A673 (cell line): ENCODE measurements at regions of chr12 and their contacts with region 1.

Region 1: GRCh38 chr12:122526683-122527477 is at the starts of genes KNTC1 and RSRC2:
- DNase-seq: peak; percentile 100
- H3K4me3 ChIP-seq: peak within 1 kb of the TSS; percentile 77
- H3K27ac ChIP-seq: peak within 1 kb of the TSS; percentile 97
- H3K4me1 ChIP-seq: peaks cover 29% of the 10 kb centered on the region
- H3K27me3 ChIP-seq: no peaks in the 10 kb centered on the region
- CTCF ChIP-seq: no peak
- total RNA-seq, gene KNTC1: 111 and 118 TPM in 2 replicates
- total RNA-seq, gene RSRC2: 106 and 108 TPM in 2 replicates

Region 2: GRCh38 chr12:122486805-122487426 is 40.0 kb before region 1 on chr12:
- CTCF ChIA-PET with region 1: no interaction called
- POLR2A ChIA-PET with region 1: interaction called, 19 read pairs
- intact Hi-C with region 1: no loop called
- DNase-seq: no peak
- H3K4me3 ChIP-seq: no peak overlapping the region
- H3K27ac ChIP-seq: peak overlapping the region; percentile 45
- H3K4me1 ChIP-seq: no peaks in the 10 kb centered on the region
- H3K27me3 ChIP-seq: no peaks in the 10 kb centered on the region
- CTCF ChIP-seq: no peak

Region 3: DNA sequence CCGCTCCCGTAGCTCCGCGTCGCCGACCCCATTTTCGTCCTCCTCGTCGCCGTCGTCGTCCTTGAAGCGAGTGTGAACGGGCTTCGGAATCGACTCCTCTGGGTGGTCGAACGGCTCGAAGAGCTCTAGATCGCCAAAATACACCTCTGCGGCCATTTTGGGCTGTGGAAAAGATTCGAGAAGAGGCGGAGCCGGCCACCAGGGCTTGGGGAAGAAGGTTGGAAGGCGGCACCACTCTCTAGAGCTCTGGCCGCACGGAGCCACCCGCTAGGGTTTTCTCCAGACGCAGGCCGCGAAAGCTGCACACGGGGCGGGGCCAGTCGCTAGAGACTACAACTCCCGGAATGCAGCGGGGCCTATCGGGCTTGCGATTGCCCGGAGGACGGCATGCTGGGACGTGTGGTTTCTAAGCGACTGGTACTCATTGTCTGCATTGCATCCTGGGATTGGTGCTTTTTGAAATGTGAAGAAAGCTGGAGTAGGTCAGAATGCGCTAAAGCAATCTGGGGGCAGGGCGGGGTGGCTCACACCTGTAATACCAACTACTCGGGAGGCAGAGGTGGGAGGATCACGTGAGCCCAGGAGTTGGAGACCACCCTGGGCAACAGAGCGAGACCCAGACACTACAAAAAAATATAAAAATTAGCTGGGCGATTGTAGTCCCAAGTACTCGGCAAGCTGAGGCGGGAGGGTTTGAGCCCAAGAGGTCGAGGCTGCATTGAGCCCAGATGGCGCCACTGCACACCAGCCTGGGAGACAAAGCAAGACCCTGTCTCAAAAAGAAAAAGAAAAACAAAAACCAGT is 26.0 kb before region 1 on chr12 and contains the start of gene ZCCHC8:
- CTCF ChIA-PET with region 1: no interaction called
- POLR2A ChIA-PET with region 1: interaction called, 10 read pairs
- intact Hi-C with region 1: loop called (anchors 2 kb)
- DNase-seq: peak; percentile 99
- H3K4me3 ChIP-seq: peak within 1 kb of the TSS; percentile 85
- H3K27ac ChIP-seq: peak within 1 kb of the TSS; percentile 99
- H3K4me1 ChIP-seq: peaks cover 25% of the 10 kb centered on the region
- H3K27me3 ChIP-seq: no peaks in the 10 kb centered on the region
- CTCF ChIP-seq: no peak
- total RNA-seq, gene ZCCHC8: 40.4 and 41.1 TPM in 2 replicates

Region 4: GRCh38 chr12:122752464-122753318 is 225.8 kb after region 1 on chr12 and contains the start of gene DENR:
- CTCF ChIA-PET with region 1: no interaction called
- POLR2A ChIA-PET with region 1: no interaction called
- intact Hi-C with region 1: loop called (anchors 5 kb)
- DNase-seq: peak; percentile 98
- H3K4me3 ChIP-seq: peak within 1 kb of the TSS; percentile 72
- H3K27ac ChIP-seq: peak within 1 kb of the TSS; percentile 91
- H3K4me1 ChIP-seq: peaks cover 15% of the 10 kb centered on the region
- H3K27me3 ChIP-seq: no peaks in the 10 kb centered on the region
- CTCF ChIP-seq: peak; percentile 93
- total RNA-seq, gene DENR: 104 and 116 TPM in 2 replicates